ENCODE measurements at regions of chr3 and their contacts with region 1.

Region 1: GRCh38 chr3:17645072-17645698 is 97.2 kb downstream of the TBC1D5 start:
- DNase-seq: no peak
- ATAC-seq: peak; percentile 78

Region 2: GRCh38 chr3:17623464-17623863 is 21.7 kb before region 1 on chr3:
- intact Hi-C with region 1: loop called in 1 of 2 experiments (anchors 1 kb)
- DNase-seq: no peak
- ATAC-seq: no peak

Measured in left colon (tissue), 2 donors.